GM12878 (cell line): ENCODE measurements at regions of chr6 and their contacts with region 1.

Region 1: DNA sequence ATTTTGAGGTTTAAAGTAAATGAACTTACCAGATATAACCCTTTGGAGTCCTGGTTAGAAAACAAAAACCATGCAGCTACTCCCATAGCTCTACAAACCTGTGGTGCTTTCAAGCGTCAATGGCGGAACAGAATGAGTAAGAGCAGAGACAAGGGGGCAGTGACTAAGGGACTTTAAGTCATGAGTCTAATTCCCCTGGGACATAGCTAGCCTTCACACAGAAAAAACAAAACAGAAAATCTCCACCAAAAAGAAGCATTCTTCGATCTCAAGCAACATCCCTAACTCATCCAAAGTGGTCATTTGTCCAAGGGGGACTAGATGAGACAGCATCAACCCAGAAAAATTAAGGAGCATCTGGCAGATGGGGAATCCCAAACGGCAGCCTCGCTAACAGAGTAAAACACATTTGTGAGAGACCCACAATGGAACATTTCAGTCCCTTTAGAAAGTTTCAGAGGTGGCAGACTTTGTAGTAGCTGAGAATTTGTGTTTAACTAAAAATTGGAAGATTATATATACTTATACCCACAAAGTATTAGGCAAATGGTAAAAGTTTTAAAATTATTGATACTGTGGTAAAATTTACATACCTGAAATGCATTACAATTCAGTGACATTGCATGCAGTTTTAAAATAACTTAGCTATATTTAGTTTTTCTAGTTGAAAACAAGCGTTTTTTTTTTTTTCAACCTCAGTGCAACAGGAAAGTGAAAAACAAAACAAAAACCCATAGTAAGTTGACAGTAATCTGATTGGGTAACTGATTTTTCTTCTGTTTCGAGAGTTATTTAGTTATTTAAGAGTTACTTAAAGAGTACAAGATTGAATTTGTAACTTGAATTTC is 67.5 kb downstream of the KCNQ5 start:
- DNase-seq: peak; percentile 96
- ATAC-seq: peak; percentile 94
- H3K4me3 ChIP-seq: peak overlapping the region; percentile 63
- H3K27ac ChIP-seq: peak overlapping the region; percentile 100
- H3K4me1 ChIP-seq: peaks cover 16% of the 10 kb centered on the region
- H3K27me3 ChIP-seq: no peaks in the 10 kb centered on the region
- CTCF ChIP-seq: no peak
- EP300 ChIP-seq: peak; percentile 89 to 93; a peak in 3 of 4 replicates
- POLR2A ChIP-seq: no peak; the same call in 1 of the 2 replicates
- RAD21 ChIP-seq: peak; percentile 38

Region 2: DNA sequence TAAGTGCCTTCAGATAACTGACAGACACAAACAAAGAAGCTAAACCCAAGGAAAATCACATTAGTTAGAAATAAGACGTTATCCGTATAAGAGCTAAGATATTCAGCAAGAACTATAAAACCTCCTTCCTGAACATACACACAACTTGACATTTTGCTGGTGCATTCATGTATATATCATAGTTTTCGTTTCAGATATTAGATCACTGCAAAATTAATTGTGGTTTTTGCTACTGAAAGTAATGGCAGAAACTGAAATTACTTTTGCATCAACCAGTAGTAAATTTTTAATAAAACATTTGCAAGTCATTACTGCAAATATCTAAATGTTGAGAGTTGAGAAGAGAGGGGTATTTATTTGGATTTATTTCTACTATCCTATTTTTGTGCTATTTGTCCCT is 93.5 kb before region 1 on chr6:
- CTCF ChIA-PET with region 1: no interaction called
- POLR2A ChIA-PET with region 1: no interaction called
- RAD21 ChIA-PET with region 1: no interaction called
- SMC1A ChIA-PET with region 1: no interaction called
- in situ Hi-C with region 1: no loop called
- intact Hi-C with region 1: no loop called
- DNase-seq: no peak
- ATAC-seq: peak; percentile 74
- H3K4me3 ChIP-seq: no peak overlapping the region
- H3K27ac ChIP-seq: no peak overlapping the region
- H3K4me1 ChIP-seq: no peaks in the 10 kb centered on the region
- H3K27me3 ChIP-seq: no peaks in the 10 kb centered on the region
- CTCF ChIP-seq: no peak
- EP300 ChIP-seq: no peak
- POLR2A ChIP-seq: no peak
- RAD21 ChIP-seq: no peak

Region 3: DNA sequence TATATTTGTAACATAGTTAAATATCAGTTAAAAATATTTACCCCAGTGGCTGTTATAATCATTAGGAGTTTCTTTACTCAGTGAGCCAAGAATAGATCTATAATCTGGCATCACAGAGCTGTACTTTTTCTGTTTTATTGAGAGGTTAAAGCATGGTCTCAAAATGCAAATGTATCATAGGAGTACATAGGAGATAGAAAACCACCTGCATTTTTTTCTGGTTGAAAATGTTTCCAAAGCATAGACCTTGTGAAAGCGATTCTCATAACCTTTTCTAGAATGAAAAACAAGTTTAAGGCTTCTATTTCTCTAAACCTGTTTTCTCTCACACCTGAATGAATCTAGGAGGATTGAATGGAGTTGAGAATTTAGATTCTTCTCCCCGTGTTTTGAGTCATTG is 53.1 kb before region 1 on chr6:
- CTCF ChIA-PET with region 1: interaction called, 14 read pairs
- POLR2A ChIA-PET with region 1: interaction called, 8 read pairs
- RAD21 ChIA-PET with region 1: interaction called, 29 read pairs
- SMC1A ChIA-PET with region 1: interaction called, 163 read pairs
- in situ Hi-C with region 1: no loop called
- intact Hi-C with region 1: no loop called
- DNase-seq: peak; percentile 60
- ATAC-seq: peak; percentile 83
- H3K4me3 ChIP-seq: peak overlapping the region; percentile 1; the same call in 1 of the 2 replicates
- H3K27ac ChIP-seq: peak overlapping the region; percentile 21
- H3K4me1 ChIP-seq: peaks cover 14% of the 10 kb centered on the region
- H3K27me3 ChIP-seq: no peaks in the 10 kb centered on the region
- CTCF ChIP-seq: no peak
- EP300 ChIP-seq: peak in 1 of 2 experiments; percentile 43; a peak in 1 of 4 replicates
- POLR2A ChIP-seq: no peak
- RAD21 ChIP-seq: no peak

Region 4: GRCh38 chr6:72704979-72705378 is 15.6 kb after region 1 on chr6:
- CTCF ChIA-PET with region 1: interaction called, 5 read pairs
- POLR2A ChIA-PET with region 1: interaction called, 5 read pairs
- RAD21 ChIA-PET with region 1: interaction called, 6 read pairs
- SMC1A ChIA-PET with region 1: interaction called, 21 read pairs
- in situ Hi-C with region 1: no loop called
- intact Hi-C with region 1: no loop called
- DNase-seq: no peak
- ATAC-seq: no peak
- H3K4me3 ChIP-seq: no peak overlapping the region
- H3K27ac ChIP-seq: no peak overlapping the region
- H3K4me1 ChIP-seq: no peaks in the 10 kb centered on the region
- H3K27me3 ChIP-seq: no peaks in the 10 kb centered on the region
- CTCF ChIP-seq: no peak
- EP300 ChIP-seq: no peak
- POLR2A ChIP-seq: no peak
- RAD21 ChIP-seq: no peak

Region 5: GRCh38 chr6:72733045-72733444 is 43.7 kb after region 1 on chr6:
- CTCF ChIA-PET with region 1: interaction called, 5 read pairs
- POLR2A ChIA-PET with region 1: no interaction called
- RAD21 ChIA-PET with region 1: interaction called, 4 read pairs
- SMC1A ChIA-PET with region 1: interaction called, 13 read pairs
- in situ Hi-C with region 1: no loop called
- intact Hi-C with region 1: no loop called
- DNase-seq: no peak
- ATAC-seq: peak; percentile 72
- H3K4me3 ChIP-seq: no peak overlapping the region
- H3K27ac ChIP-seq: peak overlapping the region; percentile 22; the same call in 1 of the 2 replicates
- H3K4me1 ChIP-seq: peaks cover 13% of the 10 kb centered on the region
- H3K27me3 ChIP-seq: no peaks in the 10 kb centered on the region
- CTCF ChIP-seq: no peak
- EP300 ChIP-seq: no peak
- POLR2A ChIP-seq: no peak
- RAD21 ChIP-seq: no peak

Region 6: DNA sequence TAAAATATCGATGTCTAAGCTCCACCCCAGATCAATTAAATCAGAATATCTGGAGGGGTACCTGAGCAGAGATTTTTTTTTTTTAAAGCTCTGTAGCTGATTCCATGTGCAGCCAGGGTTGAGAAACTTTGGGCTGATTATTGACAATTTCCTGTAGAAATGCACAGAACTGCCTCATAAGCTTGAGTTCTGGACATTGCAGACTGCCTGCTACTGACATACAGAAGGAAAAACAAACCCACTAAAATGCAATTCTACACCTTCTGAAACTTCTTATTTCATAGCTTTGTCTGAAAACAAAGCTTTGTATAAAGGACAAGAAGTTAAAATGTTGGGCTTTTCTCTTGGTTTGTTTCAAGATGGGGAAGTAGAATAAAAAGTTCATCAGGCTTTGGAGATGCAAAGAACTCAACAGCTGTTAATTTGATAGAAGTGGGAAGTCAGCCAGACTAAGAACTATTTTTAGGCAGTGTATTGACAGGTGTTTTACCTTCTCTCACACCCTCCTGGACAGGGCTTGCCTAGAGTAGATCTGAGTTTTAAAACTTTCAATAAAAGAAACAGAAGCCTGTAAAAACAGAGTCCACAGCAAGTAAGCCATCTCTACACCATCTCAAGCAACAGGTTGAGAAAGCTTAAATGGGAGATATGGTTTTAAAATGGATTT is 80.3 kb after region 1 on chr6:
- CTCF ChIA-PET with region 1: no interaction called
- POLR2A ChIA-PET with region 1: no interaction called
- RAD21 ChIA-PET with region 1: interaction called, 10 read pairs
- SMC1A ChIA-PET with region 1: interaction called, 12 read pairs
- in situ Hi-C with region 1: no loop called
- intact Hi-C with region 1: no loop called
- DNase-seq: no peak
- ATAC-seq: peak; percentile 58
- H3K4me3 ChIP-seq: no peak overlapping the region
- H3K27ac ChIP-seq: no peak overlapping the region
- H3K4me1 ChIP-seq: peaks cover 11% of the 10 kb centered on the region
- H3K27me3 ChIP-seq: no peaks in the 10 kb centered on the region
- CTCF ChIP-seq: no peak
- EP300 ChIP-seq: no peak
- POLR2A ChIP-seq: no peak
- RAD21 ChIP-seq: no peak